AG04450 (cell line): ENCODE measurements at regions of chr1 and their contacts with region 1.

Region 1: DNA sequence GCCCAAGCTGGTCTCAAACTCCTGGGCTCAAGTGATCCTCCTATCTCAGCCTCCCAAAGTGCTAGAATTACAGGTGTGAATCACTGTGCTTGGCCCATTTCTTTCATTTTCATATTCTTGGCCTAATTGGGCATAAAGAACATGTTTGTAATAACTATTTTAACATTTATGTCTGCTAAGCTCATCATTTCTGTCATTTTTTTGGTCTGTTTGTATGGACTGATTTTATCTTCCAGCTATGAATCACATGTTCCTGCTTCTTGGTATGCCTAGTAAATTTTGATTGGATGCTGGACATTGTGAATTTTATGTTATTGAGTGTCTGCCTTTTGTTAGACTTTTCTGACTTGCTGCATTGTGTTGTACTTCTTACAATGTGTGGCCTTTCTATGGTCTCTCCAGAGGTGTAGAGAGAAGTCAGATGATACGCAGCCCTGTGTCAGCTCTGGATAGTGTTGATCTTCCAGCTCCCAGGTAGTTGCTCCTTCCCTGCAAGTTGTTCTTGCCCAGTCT is 39.0 kb upstream of the PPM1J start:
- DNase-seq: no peak
- H3K4me3 ChIP-seq: no peak overlapping the region
- H3K27ac ChIP-seq: no peak overlapping the region
- H3K27me3 ChIP-seq: peaks cover 4% of the 10 kb centered on the region
- CTCF ChIP-seq: no peak

Region 2: GRCh38 chr1:112744009-112744578 is 10.1 kb before region 1 on chr1:
- CTCF ChIA-PET with region 1: interaction called, 10 read pairs
- POLR2A ChIA-PET with region 1: no interaction called
- DNase-seq: no peak
- H3K4me3 ChIP-seq: peak overlapping the region; percentile 47
- H3K27ac ChIP-seq: no peak overlapping the region
- H3K27me3 ChIP-seq: peaks cover 9% of the 10 kb centered on the region
- CTCF ChIP-seq: peak; percentile 72

Region 3: DNA sequence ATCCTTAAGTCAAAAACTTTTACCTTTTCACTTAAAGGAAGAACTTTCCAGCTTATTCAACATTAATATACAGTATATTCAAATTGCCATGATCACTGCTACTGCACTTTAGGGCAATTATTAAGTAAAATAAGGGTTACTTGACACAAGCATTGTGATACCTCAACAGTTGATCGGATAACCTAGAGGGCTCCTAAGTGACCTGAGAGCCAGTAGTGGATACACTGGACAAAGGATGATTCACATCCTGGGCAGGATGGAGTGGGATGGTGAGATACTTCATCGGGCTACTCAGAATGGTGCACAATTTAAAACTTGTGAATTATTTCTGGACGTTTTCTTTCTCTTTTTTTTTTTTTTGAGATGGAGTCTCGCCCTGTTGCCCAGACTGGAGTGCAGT is 15.4 kb after region 1 on chr1:
- CTCF ChIA-PET with region 1: no interaction called
- POLR2A ChIA-PET with region 1: no interaction called
- DNase-seq: no peak
- H3K4me3 ChIP-seq: no peak overlapping the region
- H3K27ac ChIP-seq: no peak overlapping the region
- H3K27me3 ChIP-seq: no peaks in the 10 kb centered on the region
- CTCF ChIP-seq: no peak

Region 4: GRCh38 chr1:112779665-112780526 is 25.7 kb after region 1 on chr1:
- CTCF ChIA-PET with region 1: no interaction called
- POLR2A ChIA-PET with region 1: no interaction called
- DNase-seq: no peak
- H3K4me3 ChIP-seq: no peak overlapping the region
- H3K27ac ChIP-seq: no peak overlapping the region
- H3K27me3 ChIP-seq: peaks cover 14% of the 10 kb centered on the region
- CTCF ChIP-seq: no peak